Endothelial cell of umbilical vein (primary cell): ENCODE measurements at regions of chr5 and their contacts with region 1.

Region 1: GRCh38 chr5:172479044-172479783 is 24.9 kb upstream of the SH3PXD2B start:
- DNase-seq: peak; percentile 81
- H3K4me3 ChIP-seq: no peak overlapping the region
- H3K27ac ChIP-seq: no peak overlapping the region
- H3K4me1 ChIP-seq: no peaks in the 10 kb centered on the region
- H3K27me3 ChIP-seq: no peaks in the 10 kb centered on the region
- CTCF ChIP-seq: peak; percentile 75 to 80
- POLR2A ChIP-seq: no peak

Region 2: GRCh38 chr5:172697123-172698121 is 218.2 kb after region 1 on chr5:
- CTCF ChIA-PET with region 1: interaction called, 81 read pairs
- POLR2A ChIA-PET with region 1: no interaction called
- dilution Hi-C with region 1: no loop called
- intact Hi-C with region 1: loop called (anchors 1 kb)
- DNase-seq: peak; percentile 82
- H3K4me3 ChIP-seq: peak overlapping the region; percentile 8 to 47 (median 36)
- H3K27ac ChIP-seq: no peak overlapping the region
- H3K4me1 ChIP-seq: peaks cover 5% of the 10 kb centered on the region
- H3K27me3 ChIP-seq: peaks cover 6 to 11% of the 10 kb centered on the region in 2 experiments
- CTCF ChIP-seq: peak; percentile 87 to 91
- POLR2A ChIP-seq: no peak